ENCODE measurements at regions of chr3 and their contacts with region 1.

Region 1: GRCh38 chr3:135192929-135193328 is 397.9 kb downstream of the EPHB1 start:
- DNase-seq: peak in 6 of 10 donors; percentile 24 to 55 (median 45)
- H3K4me3 ChIP-seq: no peak overlapping the region
- H3K27ac ChIP-seq: peak overlapping the region in 15 of 59 donors; percentile 2 to 77 (median 60)
- H3K27me3 ChIP-seq: no peaks in the 10 kb centered on the region
- CTCF ChIP-seq: no peak

Region 2: DNA sequence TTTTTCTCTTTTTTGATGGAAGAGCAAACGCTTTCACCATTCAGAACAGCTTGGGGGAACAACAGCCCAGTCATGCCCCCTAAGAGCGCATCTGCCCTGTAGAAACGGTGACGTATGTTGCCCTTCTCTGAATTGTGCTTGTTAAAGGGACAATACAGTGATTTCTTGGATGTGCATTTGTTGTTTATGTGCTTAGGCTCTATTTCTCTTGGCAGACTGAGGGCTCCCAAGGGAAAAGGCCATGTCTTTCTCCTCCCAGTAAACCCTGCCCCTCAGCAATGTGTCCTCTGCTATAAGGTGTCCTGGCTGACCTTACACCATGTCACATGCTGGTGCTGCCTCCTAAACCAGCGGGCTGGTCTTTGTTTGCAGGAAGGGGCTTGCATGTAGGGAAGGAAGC is 51.8 kb before region 1 on chr3:
- intact Hi-C with region 1: loop called in 1 of 2 experiments (anchors 5 kb)
- DNase-seq: peak in 2 of 10 donors; percentile 27 to 53
- H3K4me3 ChIP-seq: peak overlapping the region in 10 of 59 donors; percentile 4 to 36 (median 13)
- H3K27ac ChIP-seq: peak overlapping the region in 36 of 59 donors; percentile 2 to 91 (median 60)
- H3K27me3 ChIP-seq: no peaks in the 10 kb centered on the region
- CTCF ChIP-seq: no peak

Measured in dorsolateral prefrontal cortex (tissue), 120 donors.